CD8-positive, alpha-beta memory T cell (primary cell): ENCODE measurements at regions of chr1 and their contacts with region 1.

Region 1: DNA sequence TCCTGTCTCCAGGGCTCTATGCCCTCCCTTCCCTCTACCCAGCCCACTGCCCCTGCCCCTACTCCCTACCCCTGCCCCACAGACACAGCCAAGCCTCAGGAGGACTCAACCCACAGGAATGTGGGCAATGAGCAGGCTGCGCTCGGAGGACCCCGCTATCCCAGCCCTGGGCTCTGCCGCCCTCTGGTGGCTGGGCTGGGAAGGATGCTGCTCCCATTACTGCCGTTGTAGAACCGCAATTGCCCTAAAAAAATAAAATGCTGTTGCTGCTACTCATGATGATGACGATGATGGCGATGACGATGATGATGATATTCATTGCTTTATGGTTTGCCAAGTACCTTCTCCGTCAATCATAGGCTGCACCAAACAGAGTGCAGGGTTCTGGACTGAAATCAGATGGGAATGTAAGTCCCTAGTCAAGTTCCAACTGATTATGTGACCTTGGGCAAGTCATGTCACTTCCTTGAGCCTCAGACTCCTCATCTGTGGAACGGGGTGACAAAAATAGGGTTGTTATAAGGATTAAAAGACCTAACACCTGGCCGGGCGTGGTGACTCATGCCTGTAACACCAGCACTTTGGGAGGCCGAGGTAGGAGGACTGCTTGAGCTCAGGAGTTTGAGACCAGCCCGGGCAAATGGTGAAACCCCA is 24.6 kb downstream of the ARHGEF19 start:
- DNase-seq: peak; percentile 68 to 79 (median 72)
- H3K4me3 ChIP-seq: no peak overlapping the region
- H3K4me3 Mint-ChIP-seq: no peak overlapping the region
- H3K27ac ChIP-seq: no peak overlapping the region
- H3K27ac Mint-ChIP-seq: peak overlapping the region in 2 of 8 donors; percentile 36 to 51
- H3K4me1 ChIP-seq: no peaks in the 10 kb centered on the region
- H3K4me1 Mint-ChIP-seq: peaks cover 0 to 5% (median 4%) of the 10 kb centered on the region in 3 donors
- H3K27me3 ChIP-seq: no peaks in the 10 kb centered on the region
- H3K27me3 Mint-ChIP-seq: peaks cover 3 to 13% of the 10 kb centered on the region in 2 donors

Region 2: DNA sequence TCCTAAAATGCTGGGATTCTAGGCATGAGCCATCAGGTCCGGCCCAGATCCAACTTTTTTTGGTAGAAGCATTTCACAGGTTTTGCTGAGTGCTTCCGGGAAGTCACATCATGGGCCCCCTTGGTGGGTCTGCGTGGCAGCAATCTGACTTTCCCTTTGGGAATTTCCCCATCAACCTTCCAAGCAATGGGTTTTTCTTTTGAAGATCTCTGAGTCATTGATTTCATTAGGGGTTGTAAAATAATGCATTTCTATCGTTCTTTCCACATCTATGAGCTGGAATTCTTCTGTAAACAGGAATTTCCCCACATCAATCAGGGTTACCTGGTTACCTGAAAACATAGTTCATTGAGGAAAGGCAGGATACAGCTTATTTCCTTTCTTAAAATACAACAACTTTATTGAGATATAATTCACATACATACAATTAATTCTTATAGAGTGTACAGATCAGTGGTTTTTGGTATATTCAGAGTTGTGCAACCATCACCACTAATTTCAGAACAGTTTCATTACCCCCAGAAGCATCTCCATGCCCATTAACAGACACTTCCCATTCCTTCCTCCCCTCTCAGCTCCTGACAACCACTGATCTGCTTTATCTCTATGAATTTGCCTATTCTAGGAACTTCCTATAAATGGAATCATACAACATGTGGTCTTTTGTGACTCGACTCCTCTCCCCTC is 202.1 kb before region 1 on chr1:
- CTCF ChIA-PET with region 1: no interaction called
- POLR2A ChIA-PET with region 1: no interaction called
- DNase-seq: no peak
- H3K4me3 ChIP-seq: no peak overlapping the region
- H3K4me3 Mint-ChIP-seq: no peak overlapping the region
- H3K27ac ChIP-seq: no peak overlapping the region
- H3K27ac Mint-ChIP-seq: no peak overlapping the region
- H3K4me1 ChIP-seq: no peaks in the 10 kb centered on the region
- H3K4me1 Mint-ChIP-seq: no peaks in the 10 kb centered on the region
- H3K27me3 ChIP-seq: no peaks in the 10 kb centered on the region
- H3K27me3 Mint-ChIP-seq: peaks cover 2 to 10% of the 10 kb centered on the region in 2 donors

Region 3: DNA sequence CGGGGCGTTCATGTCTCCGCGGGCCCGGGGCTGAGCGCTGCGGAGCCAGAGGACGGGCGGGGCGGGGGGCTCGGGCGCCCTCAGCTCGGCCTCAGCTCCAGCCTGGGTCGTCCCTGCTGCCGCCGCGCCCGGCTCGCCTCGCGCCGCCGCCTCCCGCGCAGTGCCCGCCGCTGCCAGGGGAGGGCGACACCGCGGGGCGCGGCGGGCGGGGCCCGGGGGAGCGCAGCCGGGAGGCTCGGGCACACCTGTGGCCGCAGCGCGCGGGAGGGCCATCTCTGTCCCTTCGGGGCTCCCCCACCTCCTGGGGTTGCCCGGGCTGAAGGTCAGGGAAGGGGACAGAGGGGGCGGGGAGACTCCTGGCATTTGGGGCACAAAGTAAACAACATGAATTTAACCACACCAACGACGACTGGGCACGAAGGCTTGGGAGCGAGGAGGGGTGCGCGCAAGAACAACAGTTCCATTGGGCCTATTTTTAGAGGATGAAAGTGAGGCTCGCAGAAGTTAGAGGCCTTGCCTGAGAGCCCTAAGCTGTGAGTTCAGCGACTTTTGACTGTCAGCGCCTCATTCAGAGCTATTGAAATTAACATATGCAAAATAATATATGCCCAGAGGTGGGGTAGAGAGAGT is 114.3 kb before region 1 on chr1 and contains the start of gene FAM131C:
- CTCF ChIA-PET with region 1: interaction called, 196 read pairs
- POLR2A ChIA-PET with region 1: interaction called, 4 read pairs
- DNase-seq: peak in 4 of 5 donors; percentile 24 to 33 (median 28)
- H3K4me3 ChIP-seq: peak within 1 kb of the TSS; percentile 50
- H3K4me3 Mint-ChIP-seq: peak within 1 kb of the TSS; percentile 53 to 84 (median 82)
- H3K27ac ChIP-seq: no peak within 1 kb of the TSS
- H3K27ac Mint-ChIP-seq: peak within 1 kb of the TSS in 4 of 8 donors; percentile 43 to 79 (median 56)
- H3K4me1 ChIP-seq: peaks cover 20% of the 10 kb centered on the region
- H3K4me1 Mint-ChIP-seq: peaks cover 29 to 30% (median 30%) of the 10 kb centered on the region in 3 donors
- H3K27me3 ChIP-seq: peaks cover 18% of the 10 kb centered on the region
- H3K27me3 Mint-ChIP-seq: peaks cover 10 to 14% of the 10 kb centered on the region in 2 donors
- total RNA-seq, gene FAM131C: 0.62 to 0.66 TPM

Region 4: DNA sequence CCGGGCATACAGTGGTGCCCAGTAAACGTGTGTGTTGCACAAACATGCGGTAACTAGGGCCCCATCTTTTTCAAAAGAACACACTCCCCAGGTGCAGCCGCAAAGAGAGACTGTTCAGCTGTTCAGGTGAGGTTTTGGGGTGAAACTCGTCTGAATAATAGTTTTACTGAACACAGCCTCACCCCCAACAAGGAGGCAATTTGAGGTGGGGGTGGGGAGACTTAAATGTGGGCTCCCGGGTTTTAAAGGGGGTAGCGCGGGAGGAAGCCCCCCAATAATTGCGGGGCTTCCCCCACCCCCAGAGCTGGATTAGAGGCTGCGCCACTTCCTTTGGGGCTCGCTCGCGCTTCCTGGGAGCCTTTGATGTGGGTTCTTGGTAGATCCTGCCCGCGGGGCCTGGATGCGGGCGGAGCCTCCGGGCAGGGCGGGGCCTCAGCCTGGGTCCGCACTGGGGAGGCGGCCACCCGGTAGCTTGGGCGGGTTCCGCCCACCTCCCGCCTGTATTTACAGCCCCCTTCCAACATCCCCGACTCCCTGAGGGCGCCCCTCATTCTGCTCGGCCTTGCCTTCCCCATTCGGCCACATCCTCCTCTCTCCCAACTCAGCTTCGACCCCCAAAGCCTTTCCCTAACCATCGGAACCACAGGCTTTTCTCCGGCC is 25.6 kb before region 1 on chr1:
- CTCF ChIA-PET with region 1: interaction called, 10 read pairs
- POLR2A ChIA-PET with region 1: no interaction called
- DNase-seq: peak; percentile 49 to 75 (median 71)
- H3K4me3 ChIP-seq: peak overlapping the region; percentile 32
- H3K4me3 Mint-ChIP-seq: peak overlapping the region; percentile 17 to 90 (median 77)
- H3K27ac ChIP-seq: no peak overlapping the region
- H3K27ac Mint-ChIP-seq: peak overlapping the region; percentile 52 to 93 (median 84)
- H3K4me1 ChIP-seq: peaks cover 64% of the 10 kb centered on the region
- H3K4me1 Mint-ChIP-seq: peaks cover 45 to 66% (median 53%) of the 10 kb centered on the region in 3 donors
- H3K27me3 ChIP-seq: no peaks in the 10 kb centered on the region
- H3K27me3 Mint-ChIP-seq: no peaks in the 10 kb centered on the region